WTC11 (cell line): ENCODE measurements at regions of chr6 and their contacts with region 1.

Region 1: DNA sequence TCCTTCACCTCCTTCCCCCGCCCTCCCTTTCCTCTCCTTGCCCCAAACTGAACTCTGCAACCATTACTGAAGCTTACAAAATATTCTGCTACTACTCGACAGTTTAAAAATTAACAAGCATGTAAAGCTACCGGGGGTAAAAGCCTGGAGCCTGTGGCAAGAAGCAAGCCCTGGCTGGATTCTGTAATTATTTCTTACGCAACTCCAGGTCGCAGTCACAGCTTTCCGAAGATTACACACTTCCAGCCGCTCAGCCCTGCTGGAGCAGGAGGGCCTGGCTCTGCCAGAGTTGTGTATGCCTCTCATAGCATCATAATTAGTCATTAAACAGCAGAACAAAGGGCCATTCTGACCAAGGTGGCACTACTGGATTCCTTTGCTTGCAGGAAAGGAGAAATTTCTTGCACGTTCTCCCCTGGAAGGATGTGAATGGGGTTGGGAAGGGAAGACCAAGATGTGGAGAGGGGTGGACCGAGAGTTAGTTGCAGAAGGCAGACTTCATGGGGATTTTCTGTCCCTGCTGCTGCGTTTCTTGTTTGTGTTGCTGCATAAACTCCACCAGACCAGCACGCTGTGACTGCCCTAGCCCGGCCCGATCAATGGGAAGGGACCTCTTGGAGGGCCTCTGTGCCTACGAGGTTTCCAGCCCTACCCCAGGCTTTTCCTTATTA is 23.6 kb downstream of the FOXQ1 start:
- DNase-seq: no peak
- ATAC-seq: peak; percentile 26
- H3K4me3 Mint-ChIP-seq: peak overlapping the region; percentile 18
- H3K27ac Mint-ChIP-seq: no peak overlapping the region
- H3K4me1 Mint-ChIP-seq: peaks cover 34% of the 10 kb centered on the region
- H3K27me3 Mint-ChIP-seq: peaks cover 3% of the 10 kb centered on the region; the same call in 1 of the 2 replicates
- CTCF ChIP-seq: no peak

Region 2: DNA sequence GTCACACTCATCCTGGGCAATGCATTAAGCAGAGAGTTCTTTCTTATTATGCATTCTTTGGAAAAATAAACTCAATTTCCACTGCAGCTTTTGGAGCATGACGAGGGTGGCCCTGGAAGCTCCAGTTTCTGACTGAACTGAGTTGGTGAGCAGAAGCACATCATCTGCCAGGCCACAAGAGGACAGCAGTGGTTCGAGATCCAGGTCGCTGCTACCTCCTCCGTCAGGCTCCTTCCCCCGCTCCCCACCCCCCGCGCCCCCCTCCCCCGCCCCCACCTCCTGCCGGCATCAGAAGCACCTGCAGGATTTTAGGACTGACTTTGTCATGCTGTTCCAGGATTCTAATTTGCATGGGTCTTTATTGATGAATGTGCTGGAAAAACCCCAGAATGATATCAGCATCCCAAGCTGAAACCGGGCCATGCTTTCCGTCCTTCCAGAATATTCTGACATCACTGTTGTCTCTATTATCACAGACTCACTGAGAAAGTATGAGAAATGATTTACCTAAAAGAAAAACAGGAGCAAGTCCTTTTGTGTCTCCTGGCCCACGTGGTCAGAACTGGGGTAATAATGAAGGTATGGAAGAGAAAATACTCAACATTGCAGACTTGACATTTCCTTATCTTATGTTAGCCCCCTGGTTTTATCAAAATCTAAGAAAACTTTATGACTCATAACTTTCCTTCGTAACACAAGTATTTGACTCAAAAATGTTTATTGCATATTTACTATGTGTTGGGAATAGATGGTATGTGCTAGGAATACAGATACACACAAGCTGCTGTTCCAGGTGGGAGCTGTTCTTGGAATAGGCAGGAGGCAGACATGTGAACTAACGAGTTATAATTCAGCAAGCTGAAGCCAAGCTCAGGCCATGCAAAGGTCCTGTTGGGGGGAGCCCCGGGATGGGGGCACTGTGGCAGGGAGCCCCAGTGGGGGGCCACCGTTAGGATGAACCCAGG is 422.3 kb before region 1 on chr6:
- CTCF ChIA-PET with region 1: interaction called, 12 read pairs
- POLR2A ChIA-PET with region 1: no interaction called
- DNase-seq: peak; percentile 70
- ATAC-seq: peak; percentile 93
- H3K4me3 Mint-ChIP-seq: no peak overlapping the region
- H3K27ac Mint-ChIP-seq: no peak overlapping the region
- H3K4me1 Mint-ChIP-seq: peaks cover 10% of the 10 kb centered on the region
- H3K27me3 Mint-ChIP-seq: peaks cover 19% of the 10 kb centered on the region
- CTCF ChIP-seq: peak; percentile 28; the same call in 1 of the 2 replicates

Region 3: GRCh38 chr6:1311400-1312202 is 23.9 kb before region 1 on chr6 and contains the start of gene FOXQ1:
- CTCF ChIA-PET with region 1: interaction called, 12 read pairs
- POLR2A ChIA-PET with region 1: interaction called, 4 read pairs
- DNase-seq: peak; percentile 70
- ATAC-seq: peak; percentile 40
- H3K4me3 Mint-ChIP-seq: peak within 1 kb of the TSS; percentile 84
- H3K27ac Mint-ChIP-seq: no peak within 1 kb of the TSS
- H3K4me1 Mint-ChIP-seq: peaks cover 33% of the 10 kb centered on the region
- H3K27me3 Mint-ChIP-seq: peaks cover 95% of the 10 kb centered on the region
- CTCF ChIP-seq: no peak
- total RNA-seq, gene FOXQ1: 0.25 to 0.35 TPM (median 0.30 TPM) in 3 replicates

Region 4: GRCh38 chr6:1322696-1323219 is 12.7 kb before region 1 on chr6:
- CTCF ChIA-PET with region 1: no interaction called
- POLR2A ChIA-PET with region 1: no interaction called
- DNase-seq: no peak
- ATAC-seq: no peak
- H3K4me3 Mint-ChIP-seq: no peak overlapping the region
- H3K27ac Mint-ChIP-seq: no peak overlapping the region
- H3K4me1 Mint-ChIP-seq: peaks cover 10% of the 10 kb centered on the region
- H3K27me3 Mint-ChIP-seq: peaks cover 14% of the 10 kb centered on the region
- CTCF ChIP-seq: no peak